CD4-positive, alpha-beta memory T cell (primary cell): ENCODE measurements at regions of chr1 and their contacts with region 1.

Region 1: GRCh38 chr1:116794804-116795481 is 40.7 kb downstream of the CD2 start:
- DNase-seq: no peak
- H3K4me3 ChIP-seq: no peak overlapping the region
- H3K4me3 Mint-ChIP-seq: no peak overlapping the region
- H3K27ac ChIP-seq: no peak overlapping the region
- H3K27ac Mint-ChIP-seq: peak overlapping the region in 2 of 7 donors; percentile 3 to 71
- H3K4me1 ChIP-seq: peaks cover 57% of the 10 kb centered on the region
- H3K4me1 Mint-ChIP-seq: peaks cover 36 to 74% (median 58%) of the 10 kb centered on the region in 4 donors
- H3K27me3 ChIP-seq: no peaks in the 10 kb centered on the region
- H3K27me3 Mint-ChIP-seq: no peaks in the 10 kb centered on the region

Region 2: DNA sequence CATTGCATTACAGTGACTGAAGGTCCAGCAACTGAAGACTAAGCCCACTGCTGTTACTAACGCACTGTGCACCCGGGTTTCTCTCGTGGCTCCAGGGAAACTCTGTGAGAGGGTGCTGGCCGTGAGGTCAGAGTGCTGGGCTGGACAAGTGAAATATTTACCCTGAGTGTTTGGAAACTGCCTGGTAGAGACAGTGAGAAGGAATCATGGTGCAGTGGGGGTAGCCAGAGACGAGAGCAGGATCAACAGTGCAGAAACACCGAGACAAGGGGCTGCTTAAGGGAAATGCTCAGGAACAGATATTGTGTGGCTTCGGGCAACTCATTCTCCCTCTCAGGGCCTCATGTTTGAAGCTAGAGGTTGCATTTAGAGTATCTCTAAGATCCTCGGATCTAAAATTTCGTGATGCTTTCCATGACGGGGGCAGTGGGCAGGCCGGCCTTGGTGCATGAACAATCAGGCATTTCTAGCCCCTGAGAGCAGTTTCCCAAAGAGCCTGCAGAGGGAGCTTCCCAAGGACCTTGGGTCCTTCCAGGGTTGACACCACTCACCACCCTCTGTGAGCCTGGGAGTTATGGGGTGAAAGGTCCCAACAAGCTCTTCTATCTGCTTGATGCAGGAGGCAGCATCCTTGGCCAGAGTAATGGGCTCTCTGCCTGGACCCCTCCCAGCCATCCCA is 31.0 kb before region 1 on chr1:
- CTCF ChIA-PET with region 1: interaction called, 276 read pairs
- POLR2A ChIA-PET with region 1: interaction called, 1,208 read pairs
- intact Hi-C with region 1: loop called (anchors 1 kb)
- DNase-seq: peak in 3 of 5 donors; percentile 39 to 80 (median 43)
- H3K4me3 ChIP-seq: peak overlapping the region; percentile 10 to 27
- H3K4me3 Mint-ChIP-seq: peak overlapping the region; percentile 76 to 94 (median 84)
- H3K27ac ChIP-seq: peak overlapping the region; percentile 88
- H3K27ac Mint-ChIP-seq: peak overlapping the region; percentile 97 to 99 (median 98)
- H3K4me1 ChIP-seq: peaks cover 97% of the 10 kb centered on the region
- H3K4me1 Mint-ChIP-seq: peaks cover 79 to 100% (median 88%) of the 10 kb centered on the region in 4 donors
- H3K27me3 ChIP-seq: no peaks in the 10 kb centered on the region
- H3K27me3 Mint-ChIP-seq: no peaks in the 10 kb centered on the region

Region 3: GRCh38 chr1:116769561-116769977 is 25.4 kb before region 1 on chr1:
- CTCF ChIA-PET with region 1: interaction called, 276 read pairs
- POLR2A ChIA-PET with region 1: interaction called, 1,208 read pairs
- intact Hi-C with region 1: loop called (anchors 1 kb)
- DNase-seq: peak; percentile 85 to 94 (median 89)
- H3K4me3 ChIP-seq: peak overlapping the region in 1 of 2 donors; percentile 24
- H3K4me3 Mint-ChIP-seq: peak overlapping the region; percentile 29 to 94 (median 74)
- H3K27ac ChIP-seq: peak overlapping the region; percentile 88
- H3K27ac Mint-ChIP-seq: peak overlapping the region; percentile 97 to 99 (median 98)
- H3K4me1 ChIP-seq: peaks cover 87% of the 10 kb centered on the region
- H3K4me1 Mint-ChIP-seq: peaks cover 75 to 91% (median 82%) of the 10 kb centered on the region in 4 donors
- H3K27me3 ChIP-seq: no peaks in the 10 kb centered on the region
- H3K27me3 Mint-ChIP-seq: no peaks in the 10 kb centered on the region

Region 4: GRCh38 chr1:116777831-116778830 is 16.8 kb before region 1 on chr1:
- CTCF ChIA-PET with region 1: interaction called, 276 read pairs
- POLR2A ChIA-PET with region 1: interaction called, 1,208 read pairs
- intact Hi-C with region 1: loop called (anchors 2 kb)
- DNase-seq: no peak
- H3K4me3 ChIP-seq: peak overlapping the region in 1 of 2 donors; percentile 5
- H3K4me3 Mint-ChIP-seq: peak overlapping the region in 4 of 8 donors; percentile 11 to 67 (median 50)
- H3K27ac ChIP-seq: no peak overlapping the region
- H3K27ac Mint-ChIP-seq: peak overlapping the region in 1 of 7 donors; percentile 17
- H3K4me1 ChIP-seq: peaks cover 2% of the 10 kb centered on the region
- H3K4me1 Mint-ChIP-seq: peaks cover 10 to 30% (median 21%) of the 10 kb centered on the region in 4 donors
- H3K27me3 ChIP-seq: no peaks in the 10 kb centered on the region
- H3K27me3 Mint-ChIP-seq: no peaks in the 10 kb centered on the region

Region 5: DNA sequence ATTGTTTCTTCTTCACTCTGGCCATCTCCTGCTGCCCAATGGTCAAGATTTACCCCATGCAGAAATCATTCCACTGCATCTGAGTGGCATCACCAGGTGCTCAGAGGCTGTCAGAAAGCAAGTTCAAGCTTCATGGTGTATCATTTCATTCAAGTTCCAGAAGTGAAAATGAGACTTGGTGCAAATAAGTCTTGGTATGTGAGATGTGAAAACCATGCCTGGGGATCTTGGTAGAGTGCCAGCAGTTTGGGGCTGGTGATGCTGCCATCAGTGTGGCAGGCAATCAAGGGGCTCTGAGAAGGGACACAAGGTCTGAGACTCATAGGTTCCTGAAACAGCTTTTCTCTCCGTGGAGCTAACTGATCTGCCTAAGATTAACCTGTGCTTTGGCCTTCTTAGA is 11.3 kb after region 1 on chr1:
- CTCF ChIA-PET with region 1: interaction called, 5 read pairs
- POLR2A ChIA-PET with region 1: interaction called, 21 read pairs
- intact Hi-C with region 1: loop called (anchors 1 kb)
- DNase-seq: peak in 4 of 5 donors; percentile 57 to 79 (median 58)
- H3K4me3 ChIP-seq: peak overlapping the region in 1 of 2 donors; percentile 29
- H3K4me3 Mint-ChIP-seq: peak overlapping the region; percentile 67 to 96 (median 85)
- H3K27ac ChIP-seq: peak overlapping the region; percentile 80
- H3K27ac Mint-ChIP-seq: peak overlapping the region; percentile 89 to 99 (median 98)
- H3K4me1 ChIP-seq: peaks cover 97% of the 10 kb centered on the region
- H3K4me1 Mint-ChIP-seq: peaks cover 78 to 97% (median 84%) of the 10 kb centered on the region in 4 donors
- H3K27me3 ChIP-seq: no peaks in the 10 kb centered on the region
- H3K27me3 Mint-ChIP-seq: no peaks in the 10 kb centered on the region

Region 6: DNA sequence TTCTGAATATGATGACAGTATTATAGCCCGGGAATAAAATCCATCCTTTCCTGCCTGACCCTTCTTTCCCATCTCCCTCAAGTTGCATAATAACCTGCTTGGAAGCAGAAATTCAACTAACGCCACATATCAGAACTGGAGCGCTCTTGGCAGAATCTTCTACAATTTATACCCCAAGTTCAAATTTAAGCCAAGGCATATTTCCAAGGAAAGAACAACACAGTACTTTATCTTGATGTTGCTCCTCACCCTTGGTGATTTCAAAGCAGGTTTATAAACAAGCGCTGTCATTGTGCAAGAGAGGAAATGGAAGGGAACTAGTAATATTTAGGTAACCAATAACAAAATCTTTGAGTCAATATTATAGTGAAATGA is 76.8 kb after region 1 on chr1:
- CTCF ChIA-PET with region 1: no interaction called
- POLR2A ChIA-PET with region 1: no interaction called
- intact Hi-C with region 1: no loop called
- DNase-seq: no peak
- H3K4me3 ChIP-seq: no peak overlapping the region
- H3K4me3 Mint-ChIP-seq: no peak overlapping the region
- H3K27ac ChIP-seq: no peak overlapping the region
- H3K27ac Mint-ChIP-seq: no peak overlapping the region
- H3K4me1 ChIP-seq: peaks cover 21% of the 10 kb centered on the region
- H3K4me1 Mint-ChIP-seq: peaks cover 14 to 23% (median 20%) of the 10 kb centered on the region in 4 donors
- H3K27me3 ChIP-seq: no peaks in the 10 kb centered on the region
- H3K27me3 Mint-ChIP-seq: peaks cover 0 to 5% of the 10 kb centered on the region in 2 donors

Region 7: DNA sequence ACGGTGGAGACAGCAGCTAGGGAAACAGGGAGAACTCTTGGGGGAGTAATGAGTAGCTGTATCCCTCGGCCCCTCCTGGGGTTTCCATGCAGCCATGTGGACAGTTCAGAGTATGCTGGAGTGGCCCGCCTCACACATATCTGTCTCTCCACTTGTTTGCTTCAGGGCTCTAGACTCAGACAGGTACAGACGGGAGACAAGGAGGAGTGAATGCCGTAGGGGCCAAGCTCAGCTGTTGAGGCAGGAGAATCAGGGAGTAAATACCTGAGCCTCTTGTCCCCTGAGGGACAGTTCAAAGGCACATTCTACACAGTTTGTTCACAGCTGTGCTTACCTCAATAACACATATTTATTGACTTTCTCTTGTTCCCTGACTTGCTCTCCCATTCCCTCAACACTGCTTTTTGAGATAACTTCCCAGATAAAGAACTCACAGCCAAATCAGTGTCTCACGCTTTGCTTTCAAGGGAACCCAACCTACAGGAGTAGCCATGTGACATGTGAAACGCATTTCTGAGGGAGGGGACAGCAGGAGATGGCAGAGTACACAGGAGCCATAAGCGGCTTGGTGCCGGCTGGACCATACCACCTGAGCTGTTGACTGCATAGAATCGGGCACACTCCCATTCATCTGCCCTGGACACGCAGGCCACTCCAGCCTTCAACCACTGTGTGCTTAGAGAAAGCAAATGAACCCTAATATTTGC is 107.2 kb after region 1 on chr1:
- CTCF ChIA-PET with region 1: no interaction called
- POLR2A ChIA-PET with region 1: no interaction called
- intact Hi-C with region 1: no loop called
- DNase-seq: no peak
- H3K4me3 ChIP-seq: no peak overlapping the region
- H3K4me3 Mint-ChIP-seq: no peak overlapping the region
- H3K27ac ChIP-seq: no peak overlapping the region
- H3K27ac Mint-ChIP-seq: no peak overlapping the region
- H3K4me1 ChIP-seq: no peaks in the 10 kb centered on the region
- H3K4me1 Mint-ChIP-seq: no peaks in the 10 kb centered on the region
- H3K27me3 ChIP-seq: no peaks in the 10 kb centered on the region
- H3K27me3 Mint-ChIP-seq: no peaks in the 10 kb centered on the region

Region 8: DNA sequence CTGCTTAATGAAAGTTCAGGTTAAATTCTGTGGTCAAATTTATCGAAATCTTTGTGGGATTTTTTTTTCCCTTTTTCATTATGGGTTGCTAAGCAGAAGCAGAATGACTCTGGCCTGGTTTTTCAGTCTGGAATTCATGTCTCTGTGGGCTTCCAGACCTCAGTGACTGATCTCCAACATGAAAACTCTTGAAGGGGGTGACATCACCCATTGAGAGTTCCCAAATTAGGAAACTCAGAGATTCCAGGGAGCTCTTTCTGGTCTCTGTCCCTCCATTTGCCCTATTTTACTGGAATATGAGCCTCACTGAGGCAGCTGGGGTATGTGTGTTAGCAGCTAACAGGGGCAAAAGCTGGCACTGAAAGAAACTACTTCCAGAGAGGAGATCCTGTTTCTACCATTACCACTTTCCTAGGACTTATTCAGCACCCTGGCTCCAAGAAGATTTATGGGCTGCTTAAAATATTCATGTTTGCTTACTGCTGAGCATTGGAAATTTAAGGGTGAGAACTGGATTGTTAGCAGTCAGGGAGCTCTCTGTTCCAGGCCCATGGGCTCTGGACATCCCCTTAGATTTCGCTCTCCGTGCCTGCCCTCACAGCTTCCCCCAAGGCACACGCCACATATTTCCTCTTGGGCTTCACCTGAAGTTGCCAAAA is 1593.5 kb after region 1 on chr1:
- CTCF ChIA-PET with region 1: no interaction called
- POLR2A ChIA-PET with region 1: no interaction called
- intact Hi-C with region 1: no loop called
- DNase-seq: no peak
- H3K4me3 ChIP-seq: no peak overlapping the region
- H3K4me3 Mint-ChIP-seq: no peak overlapping the region
- H3K27ac ChIP-seq: no peak overlapping the region
- H3K27ac Mint-ChIP-seq: no peak overlapping the region
- H3K4me1 ChIP-seq: no peaks in the 10 kb centered on the region
- H3K4me1 Mint-ChIP-seq: no peaks in the 10 kb centered on the region
- H3K27me3 ChIP-seq: no peaks in the 10 kb centered on the region
- H3K27me3 Mint-ChIP-seq: no peaks in the 10 kb centered on the region